GM12878 (cell line): ENCODE measurements at regions of chr16 and their contacts with region 1.

Region 1: GRCh38 chr16:47037746-47038458 is 64.4 kb upstream of the DNAJA2 start:
- DNase-seq: peak; percentile 40
- ATAC-seq: peak; percentile 97
- H3K4me3 ChIP-seq: peak overlapping the region; percentile 75
- H3K27ac ChIP-seq: no peak overlapping the region
- H3K4me1 ChIP-seq: peaks cover 16% of the 10 kb centered on the region
- H3K27me3 ChIP-seq: no peaks in the 10 kb centered on the region
- CTCF ChIP-seq: peak; percentile 87 to 98 (median 95)
- EP300 ChIP-seq: 0 out of 4 replicates have a peak, but pooled peaks of 1 of the 2 experiments have one; percentile 21
- POLR2A ChIP-seq: peak; percentile 73
- RAD21 ChIP-seq: peak; percentile 90

Region 2: DNA sequence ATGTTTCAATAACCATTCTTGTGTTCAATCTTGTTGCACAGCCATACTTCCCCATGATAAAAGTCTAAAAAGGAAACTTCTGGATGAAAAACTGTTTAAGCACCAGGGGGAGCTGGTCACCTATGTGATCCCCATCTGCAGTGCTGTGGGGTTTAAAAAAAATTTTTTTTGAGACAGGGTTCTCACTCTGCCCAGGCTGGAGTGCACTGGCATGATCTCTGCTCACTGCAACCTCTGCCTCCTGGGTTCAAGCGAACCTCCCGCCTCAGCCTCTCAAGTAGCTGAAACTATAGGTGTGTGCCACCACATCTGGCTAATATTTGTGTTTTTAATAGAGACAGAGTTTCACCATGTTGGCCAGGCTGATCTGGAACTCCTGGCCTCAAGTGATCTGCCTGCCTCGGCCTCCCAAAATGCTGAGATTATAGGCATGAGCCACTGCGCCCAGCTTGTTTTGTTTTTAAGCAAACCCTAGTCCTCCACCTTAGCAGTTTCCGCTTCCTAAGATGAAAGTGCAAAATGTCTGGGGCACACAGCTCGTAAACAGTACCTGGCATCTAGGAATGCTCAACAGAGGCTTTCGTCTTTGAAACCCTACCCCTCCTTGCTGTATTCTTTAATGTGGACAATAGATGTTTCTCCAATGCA is 89.9 kb before region 1 on chr16:
- CTCF ChIA-PET with region 1: interaction called, 21 read pairs
- POLR2A ChIA-PET with region 1: no interaction called
- RAD21 ChIA-PET with region 1: interaction called, 7 read pairs
- SMC1A ChIA-PET with region 1: interaction called, 9 read pairs
- in situ Hi-C with region 1: no loop called
- intact Hi-C with region 1: loop called (anchors 2 kb)
- DNase-seq: peak; percentile 32
- ATAC-seq: peak; percentile 90
- H3K4me3 ChIP-seq: no peak overlapping the region
- H3K27ac ChIP-seq: no peak overlapping the region
- H3K4me1 ChIP-seq: peaks cover 5% of the 10 kb centered on the region; the same call in 1 of the 2 replicates
- H3K27me3 ChIP-seq: no peaks in the 10 kb centered on the region
- CTCF ChIP-seq: peak; percentile 58 to 77 (median 59); a peak in 5 of 6 replicates
- EP300 ChIP-seq: no peak
- POLR2A ChIP-seq: no peak
- RAD21 ChIP-seq: peak; percentile 95

Region 3: GRCh38 chr16:47023945-47024344 is 14.0 kb before region 1 on chr16:
- CTCF ChIA-PET with region 1: interaction called, 41 read pairs
- POLR2A ChIA-PET with region 1: no interaction called
- RAD21 ChIA-PET with region 1: interaction called, 12 read pairs
- SMC1A ChIA-PET with region 1: interaction called, 10 read pairs
- in situ Hi-C with region 1: no loop called
- intact Hi-C with region 1: no loop called
- DNase-seq: no peak
- ATAC-seq: no peak
- H3K4me3 ChIP-seq: no peak overlapping the region
- H3K27ac ChIP-seq: no peak overlapping the region
- H3K4me1 ChIP-seq: peaks cover 4% of the 10 kb centered on the region
- H3K27me3 ChIP-seq: no peaks in the 10 kb centered on the region
- CTCF ChIP-seq: no peak
- EP300 ChIP-seq: no peak
- POLR2A ChIP-seq: no peak
- RAD21 ChIP-seq: no peak

Region 4: GRCh38 chr16:47110939-47111338 is 73.0 kb after region 1 on chr16:
- CTCF ChIA-PET with region 1: interaction called, 9 read pairs
- POLR2A ChIA-PET with region 1: interaction called, 3 read pairs
- RAD21 ChIA-PET with region 1: interaction called, 10 read pairs
- SMC1A ChIA-PET with region 1: interaction called, 4 read pairs
- in situ Hi-C with region 1: no loop called
- intact Hi-C with region 1: no loop called
- DNase-seq: no peak
- ATAC-seq: no peak
- H3K4me3 ChIP-seq: no peak overlapping the region
- H3K27ac ChIP-seq: no peak overlapping the region
- H3K4me1 ChIP-seq: no peaks in the 10 kb centered on the region; the same call in 1 of the 2 replicates
- H3K27me3 ChIP-seq: no peaks in the 10 kb centered on the region
- CTCF ChIP-seq: peak in 1 of 3 experiments; percentile 14; a peak in 1 of 6 replicates
- EP300 ChIP-seq: no peak
- POLR2A ChIP-seq: no peak
- RAD21 ChIP-seq: no peak

Region 5: DNA sequence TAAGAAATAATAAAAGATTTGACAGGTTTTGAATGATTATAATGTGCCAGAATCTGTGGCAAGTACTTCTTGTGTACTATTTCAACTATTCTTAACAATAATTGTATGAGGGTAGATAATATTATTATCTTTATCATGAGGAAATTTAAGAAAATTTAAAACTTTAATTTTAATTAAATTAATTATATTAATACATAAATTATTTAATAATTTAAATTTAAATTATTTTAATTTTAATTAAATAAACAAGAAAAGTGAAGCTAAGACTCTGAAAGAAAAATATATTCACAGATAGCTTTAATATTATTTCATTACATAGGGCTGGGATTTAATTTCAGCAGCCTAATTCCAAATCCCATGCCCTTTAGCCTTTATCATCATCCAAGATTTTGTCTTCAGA is 137.2 kb after region 1 on chr16:
- CTCF ChIA-PET with region 1: no interaction called
- POLR2A ChIA-PET with region 1: no interaction called
- RAD21 ChIA-PET with region 1: no interaction called
- SMC1A ChIA-PET with region 1: no interaction called
- in situ Hi-C with region 1: no loop called
- intact Hi-C with region 1: no loop called
- DNase-seq: no peak
- ATAC-seq: no peak
- H3K4me3 ChIP-seq: no peak overlapping the region
- H3K27ac ChIP-seq: no peak overlapping the region
- H3K4me1 ChIP-seq: no peaks in the 10 kb centered on the region
- H3K27me3 ChIP-seq: no peaks in the 10 kb centered on the region
- CTCF ChIP-seq: no peak
- EP300 ChIP-seq: no peak
- POLR2A ChIP-seq: no peak
- RAD21 ChIP-seq: no peak

Region 6: GRCh38 chr16:48054881-48055601 is 1017.1 kb after region 1 on chr16:
- CTCF ChIA-PET with region 1: interaction called, 3 read pairs
- POLR2A ChIA-PET with region 1: no interaction called
- RAD21 ChIA-PET with region 1: interaction called, 7 read pairs
- SMC1A ChIA-PET with region 1: no interaction called
- in situ Hi-C with region 1: no loop called
- intact Hi-C with region 1: loop called (anchors 10 kb)
- DNase-seq: no peak
- ATAC-seq: peak; percentile 94
- H3K4me3 ChIP-seq: no peak overlapping the region
- H3K27ac ChIP-seq: no peak overlapping the region
- H3K4me1 ChIP-seq: no peaks in the 10 kb centered on the region
- H3K27me3 ChIP-seq: no peaks in the 10 kb centered on the region
- CTCF ChIP-seq: peak; percentile 92 to 95 (median 95)
- EP300 ChIP-seq: no peak
- POLR2A ChIP-seq: no peak
- RAD21 ChIP-seq: peak; percentile 87

Region 7: GRCh38 chr16:48164907-48165726 is 1127.2 kb after region 1 on chr16:
- CTCF ChIA-PET with region 1: interaction called, 22 read pairs
- POLR2A ChIA-PET with region 1: no interaction called
- RAD21 ChIA-PET with region 1: interaction called, 10 read pairs
- SMC1A ChIA-PET with region 1: interaction called, 4 read pairs
- in situ Hi-C with region 1: loop called (anchors 5 kb)
- intact Hi-C with region 1: no loop called
- DNase-seq: no peak
- ATAC-seq: peak; percentile 98
- H3K4me3 ChIP-seq: no peak overlapping the region
- H3K27ac ChIP-seq: no peak overlapping the region
- H3K4me1 ChIP-seq: peaks cover 8% of the 10 kb centered on the region; the same call in 1 of the 2 replicates
- H3K27me3 ChIP-seq: no peaks in the 10 kb centered on the region
- CTCF ChIP-seq: peak; percentile 88 to 94 (median 90)
- EP300 ChIP-seq: no peak
- POLR2A ChIP-seq: no peak
- RAD21 ChIP-seq: peak; percentile 93